GM12878 (cell line): ENCODE measurements at regions of chr1 and their contacts with region 1.

Region 1: GRCh38 chr1:237864338-237865244 is 26.1 kb downstream of the ZP4 start:
- DNase-seq: peak; percentile 5
- ATAC-seq: peak; percentile 93
- H3K4me3 ChIP-seq: no peak overlapping the region
- H3K27ac ChIP-seq: no peak overlapping the region
- H3K4me1 ChIP-seq: no peaks in the 10 kb centered on the region
- H3K27me3 ChIP-seq: no peaks in the 10 kb centered on the region
- CTCF ChIP-seq: peak; percentile 64 to 96 (median 85); a peak in 5 of 6 replicates
- EP300 ChIP-seq: no peak
- POLR2A ChIP-seq: no peak
- RAD21 ChIP-seq: peak; percentile 73

Region 2: GRCh38 chr1:237851210-237851845 is 13.3 kb before region 1 on chr1:
- CTCF ChIA-PET with region 1: interaction called, 45 read pairs
- POLR2A ChIA-PET with region 1: no interaction called
- RAD21 ChIA-PET with region 1: interaction called, 9 read pairs
- SMC1A ChIA-PET with region 1: interaction called, 13 read pairs
- in situ Hi-C with region 1: no loop called
- intact Hi-C with region 1: no loop called
- DNase-seq: no peak
- ATAC-seq: peak; percentile 91
- H3K4me3 ChIP-seq: no peak overlapping the region
- H3K27ac ChIP-seq: no peak overlapping the region
- H3K4me1 ChIP-seq: no peaks in the 10 kb centered on the region
- H3K27me3 ChIP-seq: no peaks in the 10 kb centered on the region; a peak in 1 of 4 replicates
- CTCF ChIP-seq: peak; percentile 44 to 59 (median 58); a peak in 5 of 6 replicates
- EP300 ChIP-seq: no peak
- POLR2A ChIP-seq: no peak
- RAD21 ChIP-seq: peak; percentile 54

Region 3: DNA sequence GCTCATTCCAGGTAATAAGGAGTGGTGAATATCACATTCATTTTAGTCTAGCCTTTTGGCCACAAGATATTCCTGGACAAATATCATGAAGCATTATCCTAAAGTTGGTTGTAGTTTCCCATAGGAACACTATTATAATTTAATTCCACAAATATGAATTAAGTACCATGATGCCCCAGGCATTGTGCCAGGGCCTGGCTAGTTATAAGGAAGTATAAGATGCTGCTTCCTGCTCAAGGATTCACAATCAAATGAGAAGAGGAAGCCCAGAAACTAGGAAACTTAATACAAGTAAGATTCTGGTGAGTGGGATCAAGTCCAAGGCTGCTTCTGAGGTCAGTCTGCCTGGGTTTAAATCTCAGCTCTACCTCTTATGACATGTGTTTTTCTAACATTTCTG is 56.7 kb after region 1 on chr1:
- CTCF ChIA-PET with region 1: no interaction called
- POLR2A ChIA-PET with region 1: no interaction called
- RAD21 ChIA-PET with region 1: no interaction called
- SMC1A ChIA-PET with region 1: no interaction called
- in situ Hi-C with region 1: no loop called
- intact Hi-C with region 1: no loop called
- DNase-seq: no peak
- ATAC-seq: no peak
- H3K4me3 ChIP-seq: no peak overlapping the region
- H3K27ac ChIP-seq: no peak overlapping the region
- H3K4me1 ChIP-seq: no peaks in the 10 kb centered on the region
- H3K27me3 ChIP-seq: no peaks in the 10 kb centered on the region
- CTCF ChIP-seq: no peak
- EP300 ChIP-seq: no peak
- POLR2A ChIP-seq: no peak
- RAD21 ChIP-seq: no peak

Region 4: GRCh38 chr1:238232084-238232710 is 367.6 kb after region 1 on chr1:
- CTCF ChIA-PET with region 1: interaction called, 45 read pairs
- POLR2A ChIA-PET with region 1: no interaction called
- RAD21 ChIA-PET with region 1: interaction called, 18 read pairs
- SMC1A ChIA-PET with region 1: interaction called, 29 read pairs
- in situ Hi-C with region 1: no loop called
- intact Hi-C with region 1: loop called (anchors 2 kb)
- DNase-seq: no peak
- ATAC-seq: peak; percentile 47
- H3K4me3 ChIP-seq: no peak overlapping the region
- H3K27ac ChIP-seq: no peak overlapping the region
- H3K4me1 ChIP-seq: no peaks in the 10 kb centered on the region
- H3K27me3 ChIP-seq: no peaks in the 10 kb centered on the region
- CTCF ChIP-seq: no peak
- EP300 ChIP-seq: no peak
- POLR2A ChIP-seq: no peak
- RAD21 ChIP-seq: no peak

Region 5: GRCh38 chr1:238252033-238252802 is 387.6 kb after region 1 on chr1:
- CTCF ChIA-PET with region 1: interaction called, 24 read pairs
- POLR2A ChIA-PET with region 1: no interaction called
- RAD21 ChIA-PET with region 1: no interaction called
- SMC1A ChIA-PET with region 1: interaction called, 10 read pairs
- in situ Hi-C with region 1: no loop called
- intact Hi-C with region 1: no loop called
- DNase-seq: no peak
- ATAC-seq: peak; percentile 97
- H3K4me3 ChIP-seq: no peak overlapping the region
- H3K27ac ChIP-seq: no peak overlapping the region
- H3K4me1 ChIP-seq: no peaks in the 10 kb centered on the region
- H3K27me3 ChIP-seq: no peaks in the 10 kb centered on the region
- CTCF ChIP-seq: peak; percentile 30 to 56 (median 53); a peak in 5 of 6 replicates
- EP300 ChIP-seq: no peak
- POLR2A ChIP-seq: no peak
- RAD21 ChIP-seq: peak; percentile 50